GM10248 (cell line): ENCODE measurements at regions of chr1 and their contacts with region 1.

Region 1: GRCh38 chr1:160006312-160006940 is 25.4 kb downstream of the PIGM start:
- DNase-seq: peak; percentile 81
- CTCF ChIP-seq: peak; percentile 97

Region 2: GRCh38 chr1:159798893-159799292 is 207.5 kb before region 1 on chr1:
- CTCF ChIA-PET with region 1: interaction called, 160 read pairs
- POLR2A ChIA-PET with region 1: no interaction called
- DNase-seq: peak; percentile 67
- CTCF ChIP-seq: peak; percentile 57

Region 3: GRCh38 chr1:159891275-159892157 is 114.9 kb before region 1 on chr1:
- CTCF ChIA-PET with region 1: interaction called, 51 read pairs
- POLR2A ChIA-PET with region 1: no interaction called
- DNase-seq: peak; percentile 71
- CTCF ChIP-seq: peak; percentile 98

Region 4: GRCh38 chr1:159945483-159946241 is 60.8 kb before region 1 on chr1 and contains the start of gene IGSF9:
- CTCF ChIA-PET with region 1: interaction called, 232 read pairs
- POLR2A ChIA-PET with region 1: no interaction called
- DNase-seq: peak; percentile 61
- CTCF ChIP-seq: peak; percentile 39

Region 5: DNA sequence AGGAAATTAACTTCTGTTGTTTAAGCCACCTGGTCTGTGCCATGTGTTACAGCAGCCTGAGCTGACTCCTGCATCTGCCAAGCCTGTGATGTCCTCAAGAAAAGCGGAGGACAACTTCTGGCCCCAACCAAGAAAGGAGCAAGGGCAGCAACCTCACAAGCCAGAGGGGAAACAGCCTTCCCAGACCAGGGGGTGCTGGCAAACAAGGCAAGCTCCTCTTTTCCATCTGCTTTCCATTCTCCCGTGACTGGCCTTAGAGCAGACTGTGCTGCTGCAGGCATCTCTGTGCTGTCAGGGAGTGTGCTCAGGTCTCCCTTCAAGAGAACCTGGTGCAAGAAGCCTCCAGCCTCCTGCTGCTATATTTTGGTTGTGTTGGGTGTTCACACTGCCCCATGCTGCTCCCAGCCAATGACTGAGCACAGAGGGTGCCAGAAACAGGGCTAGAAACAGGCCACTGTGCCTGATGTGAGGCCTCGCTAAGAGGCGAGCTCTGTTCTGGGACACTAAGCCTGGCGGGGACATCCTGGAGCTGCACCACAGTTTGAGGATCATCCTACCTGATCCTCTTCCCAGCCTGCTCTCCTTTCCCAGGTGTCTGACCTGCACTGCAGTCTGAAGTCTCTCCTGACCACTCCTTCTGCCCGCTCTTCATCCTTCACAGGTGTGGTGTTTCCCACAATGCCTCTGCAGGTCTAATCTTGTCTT is 24.9 kb before region 1 on chr1:
- CTCF ChIA-PET with region 1: interaction called, 25 read pairs
- POLR2A ChIA-PET with region 1: no interaction called
- DNase-seq: no peak
- CTCF ChIP-seq: no peak

Region 6: DNA sequence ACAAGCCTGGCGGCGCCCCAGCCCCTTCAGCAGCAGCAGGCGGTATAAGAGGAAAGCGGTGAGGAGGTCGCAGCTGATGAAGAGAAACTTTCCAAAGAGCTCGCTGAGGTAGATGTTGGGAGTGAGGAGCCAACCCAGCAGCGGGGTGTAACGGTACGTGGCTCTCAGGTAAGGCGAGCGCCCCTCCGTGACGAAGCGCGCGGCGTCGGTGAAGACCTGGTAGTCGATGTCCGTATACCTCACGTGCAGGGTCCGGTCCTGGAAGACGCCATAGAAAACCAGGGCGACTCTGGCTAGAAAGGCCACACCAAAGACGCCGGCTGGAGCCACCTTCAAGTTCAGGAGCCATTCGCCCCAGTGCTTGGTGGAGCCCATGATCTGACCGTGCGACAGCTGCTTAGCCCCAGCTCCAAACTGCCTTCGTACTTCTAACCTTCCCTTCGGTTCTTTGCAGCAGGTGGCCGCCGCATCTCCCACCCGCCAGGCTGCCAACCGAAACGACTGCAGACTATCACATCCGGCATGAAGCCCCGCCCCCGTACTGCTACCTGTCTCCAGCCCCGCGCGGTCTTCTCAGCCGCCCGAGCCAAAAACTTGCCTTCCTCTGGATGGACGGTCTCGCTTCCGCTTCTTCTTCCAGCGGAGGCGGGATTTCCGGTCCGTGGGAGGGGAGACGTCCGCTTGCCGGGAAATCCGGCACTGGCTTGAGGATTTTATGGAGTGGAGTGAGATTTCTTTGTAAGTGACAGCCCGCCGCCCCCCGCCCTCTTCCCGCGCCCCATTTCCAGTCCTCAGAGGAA is 25.1 kb after region 1 on chr1 and contains the start of gene PIGM:
- CTCF ChIA-PET with region 1: interaction called, 34 read pairs
- POLR2A ChIA-PET with region 1: no interaction called
- DNase-seq: peak; percentile 93
- CTCF ChIP-seq: no peak

Region 7: GRCh38 chr1:160137216-160137862 is 130.9 kb after region 1 on chr1:
- CTCF ChIA-PET with region 1: no interaction called
- POLR2A ChIA-PET with region 1: no interaction called
- DNase-seq: no peak
- CTCF ChIP-seq: no peak

Region 8: GRCh38 chr1:160177231-160177630 is 170.8 kb after region 1 on chr1:
- CTCF ChIA-PET with region 1: no interaction called
- POLR2A ChIA-PET with region 1: no interaction called
- DNase-seq: no peak
- CTCF ChIP-seq: no peak